ENCODE measurements at regions of chr15 and their contacts with region 1.

Region 1: DNA sequence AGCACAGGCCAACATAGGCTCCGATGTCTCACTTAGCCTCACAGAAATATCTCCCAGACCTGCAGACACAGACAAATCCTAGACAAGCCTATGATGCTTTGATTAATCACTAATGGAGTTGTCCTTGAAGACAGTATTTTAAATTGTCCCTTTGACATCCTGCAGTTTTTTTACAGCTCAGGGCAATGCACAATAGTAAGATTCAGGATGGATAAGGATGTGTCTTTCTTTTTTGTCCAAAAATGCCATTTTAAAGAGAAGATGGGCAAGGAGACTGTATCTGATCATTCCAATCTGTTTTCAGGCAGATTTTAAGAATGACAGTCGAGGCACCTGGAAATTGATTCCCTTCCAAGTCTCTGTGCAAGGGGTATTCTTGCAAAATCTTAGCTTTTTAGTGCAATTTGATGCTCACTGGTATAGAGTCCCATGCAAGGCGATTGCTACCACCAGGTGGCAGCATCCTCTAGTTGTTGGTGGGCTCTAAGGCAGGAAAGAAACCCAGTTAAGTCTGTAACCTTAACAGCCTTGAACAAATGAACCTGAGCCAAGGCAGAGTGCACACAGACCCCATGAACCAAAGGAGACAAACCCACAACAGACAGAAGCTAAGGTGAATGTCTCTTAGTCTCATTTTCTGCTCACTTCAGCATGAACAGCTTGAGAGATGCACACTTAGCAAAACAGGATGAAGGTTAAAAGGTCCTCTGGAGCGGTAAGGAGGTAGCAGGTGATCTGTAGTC is 51.2 kb upstream of the MINAR1 start:
- H3K4me3 ChIP-seq: no peak overlapping the region
- H3K27ac ChIP-seq: no peak overlapping the region
- H3K4me1 ChIP-seq: no peaks in the 10 kb centered on the region
- CTCF ChIP-seq: peak; percentile 47

Region 2: GRCh38 chr15:78739996-78740903 is 640.7 kb before region 1 on chr15:
- CTCF ChIA-PET with region 1: no interaction called
- POLR2A ChIA-PET with region 1: no interaction called
- H3K4me3 ChIP-seq: no peak overlapping the region
- H3K27ac ChIP-seq: no peak overlapping the region
- H3K4me1 ChIP-seq: no peaks in the 10 kb centered on the region
- CTCF ChIP-seq: no peak

Region 3: GRCh38 chr15:79339564-79340314 is 41.2 kb before region 1 on chr15:
- CTCF ChIA-PET with region 1: interaction called, 40 read pairs
- POLR2A ChIA-PET with region 1: no interaction called
- H3K4me3 ChIP-seq: no peak overlapping the region
- H3K27ac ChIP-seq: no peak overlapping the region
- H3K4me1 ChIP-seq: no peaks in the 10 kb centered on the region
- CTCF ChIP-seq: peak; percentile 58; the same call in 1 of the 2 replicates

Region 4: DNA sequence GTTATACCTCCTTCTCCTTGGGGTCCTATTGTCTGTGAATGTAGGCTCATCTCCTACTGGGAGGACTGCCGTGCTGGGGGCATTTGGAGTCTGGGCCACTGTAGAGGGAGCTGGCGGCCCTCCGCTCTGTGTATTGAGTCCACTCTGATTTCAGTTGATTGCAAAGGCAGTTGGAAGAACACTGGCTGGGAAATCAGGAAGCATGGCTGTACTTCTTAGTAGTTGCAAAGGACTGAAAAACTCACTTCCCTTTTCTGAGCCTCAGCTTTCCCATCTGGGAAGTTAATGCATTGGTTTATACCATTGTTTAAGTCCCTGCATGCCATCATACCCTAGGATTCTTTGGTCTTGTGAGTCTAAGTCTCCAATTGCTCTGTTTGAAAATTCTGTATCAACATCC is 23.4 kb before region 1 on chr15:
- CTCF ChIA-PET with region 1: interaction called, 16 read pairs
- POLR2A ChIA-PET with region 1: no interaction called
- H3K4me3 ChIP-seq: no peak overlapping the region
- H3K27ac ChIP-seq: no peak overlapping the region
- H3K4me1 ChIP-seq: no peaks in the 10 kb centered on the region
- CTCF ChIP-seq: no peak

Region 5: DNA sequence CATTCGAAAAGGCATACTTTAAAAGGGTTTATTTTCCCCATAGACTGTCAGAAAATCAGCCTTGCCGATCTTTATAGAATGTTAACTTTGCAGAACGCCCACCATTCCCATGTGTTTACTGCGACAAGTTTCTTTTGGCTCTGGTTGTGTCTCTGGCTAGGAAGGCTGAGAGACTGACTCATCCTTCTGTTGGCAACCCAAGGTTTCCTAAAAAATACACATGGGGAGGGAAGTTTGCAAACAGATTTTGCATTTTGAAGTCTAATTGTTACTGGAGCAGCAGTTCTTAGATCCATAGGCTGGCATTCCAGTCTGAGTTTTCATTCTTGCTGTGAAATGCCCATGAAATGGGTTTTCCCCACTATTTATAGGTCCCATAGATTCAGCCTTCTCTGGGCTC is 13.3 kb after region 1 on chr15:
- CTCF ChIA-PET with region 1: interaction called, 39 read pairs
- POLR2A ChIA-PET with region 1: no interaction called
- H3K4me3 ChIP-seq: no peak overlapping the region
- H3K27ac ChIP-seq: no peak overlapping the region
- H3K4me1 ChIP-seq: 0 out of 2 replicates have a peak, but pooled peaks cover 3% of the 10 kb centered on the region
- CTCF ChIP-seq: no peak

Region 6: DNA sequence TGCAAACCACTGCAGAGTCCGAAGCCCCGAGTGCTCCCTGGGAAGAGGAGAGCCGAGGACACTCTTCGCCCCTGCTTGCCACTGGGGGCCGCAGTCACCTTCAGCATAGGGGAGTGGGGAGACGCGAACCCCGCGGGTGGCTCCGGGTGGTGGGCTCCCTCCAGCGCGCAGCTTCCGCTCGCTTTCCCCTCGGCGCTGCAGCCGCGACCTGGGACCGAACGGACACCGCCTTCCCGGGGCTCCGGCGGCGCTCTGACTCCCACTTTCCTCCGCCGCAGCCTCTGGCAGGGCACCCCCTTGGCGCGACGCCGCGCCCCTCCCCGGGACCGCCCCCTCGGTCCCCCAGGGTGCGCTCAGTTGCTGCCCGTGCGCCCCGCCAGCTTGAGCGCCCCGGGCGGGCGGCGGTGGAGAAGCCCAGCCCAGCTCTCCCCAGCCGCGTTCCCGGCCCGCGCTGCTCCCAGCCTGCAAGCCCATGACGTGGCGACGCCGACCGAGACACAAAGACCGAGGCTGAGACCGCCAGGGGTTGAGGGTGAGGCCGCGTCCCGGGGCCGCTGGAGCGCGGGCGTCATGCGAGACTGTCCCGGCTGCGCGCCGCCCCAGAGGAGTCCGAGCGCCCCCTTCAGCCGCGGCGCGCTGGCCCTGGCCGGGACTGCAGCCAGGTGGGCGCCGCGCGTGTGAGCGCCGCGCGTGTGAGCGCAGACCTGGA is 50.9 kb after region 1 on chr15 and contains the start of gene MINAR1:
- CTCF ChIA-PET with region 1: interaction called, 25 read pairs
- POLR2A ChIA-PET with region 1: no interaction called
- H3K4me3 ChIP-seq: peak within 1 kb of the TSS; percentile 44
- H3K27ac ChIP-seq: peak within 1 kb of the TSS; percentile 8; the same call in 1 of the 2 replicates
- H3K4me1 ChIP-seq: no peaks in the 10 kb centered on the region
- CTCF ChIP-seq: peak; percentile 50; the same call in 1 of the 2 replicates

Region 7: DNA sequence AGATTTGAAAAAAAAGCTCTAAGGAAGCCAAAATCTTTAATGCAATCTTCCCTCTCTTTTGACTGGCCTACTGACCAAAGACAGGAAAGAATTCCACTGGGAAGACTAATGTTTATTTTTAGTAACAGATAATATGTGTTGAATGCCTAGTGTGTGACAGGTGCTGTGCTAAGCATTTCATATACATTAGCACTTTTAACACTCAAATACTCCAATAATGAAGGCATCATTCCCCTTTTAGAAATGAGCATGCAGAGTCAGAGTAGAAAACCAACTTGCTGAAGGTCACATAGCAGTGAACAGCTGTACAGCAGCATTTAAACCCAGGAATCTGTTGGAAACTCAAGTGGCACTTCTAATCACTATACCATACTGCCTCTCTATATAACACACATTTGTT is 221.8 kb after region 1 on chr15:
- CTCF ChIA-PET with region 1: interaction called, 10 read pairs
- POLR2A ChIA-PET with region 1: interaction called, 3 read pairs
- H3K4me3 ChIP-seq: no peak overlapping the region
- H3K27ac ChIP-seq: no peak overlapping the region
- H3K4me1 ChIP-seq: no peaks in the 10 kb centered on the region
- CTCF ChIP-seq: no peak

Region 8: GRCh38 chr15:79853458-79854328 is 472.8 kb after region 1 on chr15:
- CTCF ChIA-PET with region 1: interaction called, 133 read pairs
- POLR2A ChIA-PET with region 1: no interaction called
- H3K4me3 ChIP-seq: no peak overlapping the region
- H3K27ac ChIP-seq: no peak overlapping the region
- H3K4me1 ChIP-seq: no peaks in the 10 kb centered on the region
- CTCF ChIP-seq: peak; percentile 74